Stomach (tissue), 19 donors: ENCODE measurements at regions of chr18 and their contacts with region 1.

Region 1: DNA sequence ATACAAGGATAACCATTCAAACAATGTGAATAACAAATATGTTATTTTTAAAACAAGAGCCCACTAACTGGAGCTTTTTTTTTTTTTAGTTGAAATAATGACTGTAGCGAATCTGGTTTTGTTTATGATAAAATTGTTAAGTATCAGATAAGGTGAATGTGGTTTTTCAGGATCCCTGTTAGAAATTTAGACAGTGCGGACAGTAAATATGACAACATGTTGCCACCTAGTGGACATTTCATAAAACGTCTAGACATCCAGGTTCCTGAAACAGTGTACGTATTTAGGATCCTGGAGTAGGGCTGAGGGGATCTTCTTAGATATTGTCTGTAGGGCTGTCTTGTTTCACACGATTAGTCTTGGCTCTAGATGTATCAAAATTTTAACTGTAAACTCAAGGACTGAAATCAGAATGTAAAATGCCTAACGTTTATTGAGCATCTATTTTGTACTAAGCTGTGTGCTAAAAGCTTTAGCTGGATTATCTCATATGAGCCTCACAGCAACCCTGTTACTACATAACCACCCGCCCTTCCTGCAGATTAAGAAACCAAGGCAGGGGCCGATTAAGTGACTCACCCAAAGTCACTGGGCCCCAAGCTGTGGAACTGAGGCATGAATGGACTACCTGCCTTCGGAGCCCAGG is 23.9 kb upstream of the CCDC68 start:
- DNase-seq: peak in 1 of 2 donors; percentile 82
- H3K4me3 ChIP-seq: no peak overlapping the region
- H3K27ac ChIP-seq: no peak overlapping the region
- H3K4me1 ChIP-seq: no peaks in the 10 kb centered on the region
- H3K27me3 ChIP-seq: no peaks in the 10 kb centered on the region
- CTCF ChIP-seq: peak in 5 of 7 experiments; percentile 42 to 76 (median 59)
- EP300 ChIP-seq: no peak
- POLR2A ChIP-seq: no peak

Region 2: GRCh38 chr18:54444319-54444914 is 538.7 kb before region 1 on chr18:
- intact Hi-C with region 1: loop called (anchors 10 kb)
- DNase-seq: peak; percentile 49 to 84
- H3K4me3 ChIP-seq: no peak overlapping the region
- H3K27ac ChIP-seq: no peak overlapping the region
- H3K4me1 ChIP-seq: no peaks in the 10 kb centered on the region
- H3K27me3 ChIP-seq: peaks cover 0 to 12% (median 0%) of the 10 kb centered on the region in 3 donors
- CTCF ChIP-seq: peak in 5 of 7 experiments; percentile 35 to 60 (median 47)
- EP300 ChIP-seq: no peak
- POLR2A ChIP-seq: no peak